ENCODE measurements at regions of chr13 and their contacts with region 1.

Region 1: GRCh38 chr13:28658796-28659620 is at the start of gene POMP:
- DNase-seq: peak; percentile 94
- CTCF ChIP-seq: no peak

Region 2: GRCh38 chr13:28618230-28618994 is 40.6 kb before region 1 on chr13:
- CTCF ChIA-PET with region 1: no interaction called
- POLR2A ChIA-PET with region 1: no interaction called
- DNase-seq: no peak
- CTCF ChIP-seq: no peak

Region 3: DNA sequence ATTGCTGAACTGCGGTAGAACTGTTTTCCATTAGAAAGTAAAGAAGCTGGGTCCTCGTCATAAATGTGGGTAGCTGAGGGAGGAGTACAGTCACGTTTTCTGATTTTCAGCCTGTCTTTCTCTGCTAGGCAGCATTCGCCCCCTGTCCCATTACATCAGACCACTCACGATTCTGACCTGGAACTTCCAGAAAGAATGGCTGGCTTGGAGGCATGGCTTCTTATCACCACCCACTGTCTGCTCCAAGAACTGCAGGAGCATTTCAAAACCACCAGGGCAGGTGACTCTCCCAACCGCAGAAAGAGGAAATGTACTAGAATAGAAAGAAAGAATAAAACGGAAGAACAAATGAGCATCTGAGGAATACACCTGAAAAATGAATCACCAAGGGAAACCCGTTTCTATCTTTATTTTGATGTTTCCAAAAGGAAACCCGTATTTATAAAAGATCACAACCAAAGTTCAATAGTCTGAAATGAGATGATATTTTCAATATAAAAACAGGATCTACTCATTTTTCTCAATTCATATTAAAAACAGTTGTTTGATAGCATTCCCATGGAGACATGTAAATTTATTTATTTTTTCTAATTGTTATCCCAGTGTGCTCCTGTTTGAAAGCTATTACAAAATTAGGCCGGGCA is 22.2 kb before region 1 on chr13:
- CTCF ChIA-PET with region 1: interaction called, 16 read pairs
- POLR2A ChIA-PET with region 1: interaction called, 5 read pairs
- DNase-seq: peak; percentile 50
- CTCF ChIP-seq: peak; percentile 78

Region 4: DNA sequence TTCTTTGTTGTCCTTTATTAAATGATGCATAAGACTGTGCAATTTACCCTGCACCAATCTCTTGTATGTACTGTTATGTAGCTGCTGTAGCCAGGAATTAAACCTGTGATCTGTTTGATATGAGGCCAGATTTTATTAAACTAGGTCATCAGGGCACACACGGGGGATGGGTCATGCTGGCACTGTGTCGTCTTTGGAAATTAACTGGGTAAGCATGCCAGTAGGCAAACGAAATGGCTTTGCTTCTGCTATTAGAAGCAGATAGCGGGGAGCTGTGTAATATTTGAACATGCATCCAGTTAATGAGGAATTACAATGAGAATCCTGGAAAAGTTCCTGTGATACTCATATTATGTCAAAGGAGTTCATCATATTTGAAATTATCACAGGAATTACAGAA is 184.6 kb after region 1 on chr13:
- CTCF ChIA-PET with region 1: no interaction called
- POLR2A ChIA-PET with region 1: no interaction called
- DNase-seq: no peak
- CTCF ChIP-seq: no peak

Region 5: DNA sequence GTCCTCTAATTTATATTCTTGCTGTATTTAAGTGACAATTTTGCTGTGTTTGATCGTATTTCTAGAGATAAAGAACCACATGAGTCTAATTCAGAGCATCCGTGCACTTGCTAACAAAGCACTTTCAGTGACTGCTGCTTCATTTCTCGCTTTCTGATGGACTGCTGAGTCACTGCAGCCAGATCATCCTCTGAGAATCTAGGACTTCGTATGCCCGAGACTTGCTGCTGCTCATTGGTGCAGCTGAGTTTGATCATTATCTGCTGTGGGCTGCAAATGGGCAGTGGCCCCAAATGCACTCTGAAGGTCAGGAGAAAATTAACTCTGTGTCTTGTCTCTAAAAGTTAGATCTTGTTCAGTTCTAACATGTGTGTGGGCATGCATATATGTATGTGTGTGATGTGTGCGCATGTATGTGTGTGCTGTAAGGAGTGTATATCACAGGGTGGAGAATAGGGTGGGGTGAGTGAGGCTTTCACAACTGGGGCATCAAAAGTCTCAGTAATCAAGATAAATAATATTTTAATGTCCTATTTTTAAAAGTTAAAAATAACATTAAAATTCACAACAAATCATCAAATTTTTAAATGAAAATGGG is 503.7 kb after region 1 on chr13:
- CTCF ChIA-PET with region 1: no interaction called
- POLR2A ChIA-PET with region 1: no interaction called
- DNase-seq: no peak
- CTCF ChIP-seq: no peak

Measured in GM10248 (cell line).